ENCODE measurements at regions of chr5 and their contacts with region 1.

Region 1: GRCh38 chr5:156595132-156595787 is 254.8 kb upstream of the PPP1R2B start:
- DNase-seq: peak in 6 of 10 donors; percentile 22 to 88 (median 58)

Region 2: GRCh38 chr5:156326718-156327259 is 268.5 kb before region 1 on chr5 and contains the start of gene SGCD:
- intact Hi-C with region 1: loop called (anchors 10 kb)
- DNase-seq: peak; percentile 43 to 93 (median 62)

Region 3: GRCh38 chr5:156497804-156498208 is 97.5 kb before region 1 on chr5:
- intact Hi-C with region 1: loop called (anchors 10 kb)
- DNase-seq: no peak

Region 4: DNA sequence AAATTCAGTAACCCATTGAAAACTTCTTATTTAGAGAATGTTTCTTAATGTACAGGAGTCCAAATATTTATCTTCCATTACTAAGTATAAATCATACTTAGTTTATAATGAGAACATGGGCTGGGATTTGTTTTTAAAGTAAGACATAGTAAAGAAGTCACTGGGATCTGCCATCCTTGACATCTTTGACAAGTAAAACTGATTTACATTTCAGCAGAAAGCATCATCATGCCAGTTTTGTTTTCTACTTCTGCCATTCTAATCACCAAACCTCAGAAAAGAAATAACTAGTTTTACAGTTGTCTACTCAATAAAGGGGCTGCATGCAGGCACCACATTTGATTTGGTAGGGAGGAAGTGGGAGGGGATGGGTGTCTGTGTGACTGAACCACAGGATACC is 33.2 kb after region 1 on chr5:
- intact Hi-C with region 1: no loop called
- DNase-seq: no peak